Calu3 (cell line): ENCODE measurements at regions of chr7 and their contacts with region 1.

Region 1: GRCh38 chr7:54877683-54878082 is 118.7 kb upstream of the SEC61G start:
- DNase-seq: peak; percentile 43
- H3K4me3 Mint-ChIP-seq: no peak overlapping the region
- H3K27ac Mint-ChIP-seq: peak overlapping the region; percentile 13
- H3K4me1 Mint-ChIP-seq: peaks cover 57% of the 10 kb centered on the region
- H3K27me3 Mint-ChIP-seq: no peaks in the 10 kb centered on the region
- CTCF ChIP-seq: no peak

Region 2: GRCh38 chr7:54758702-54759592 is 118.7 kb before region 1 on chr7 and contains the start of gene SEC61G:
- CTCF ChIA-PET with region 1: interaction called, 10 read pairs
- intact Hi-C with region 1: no loop called
- DNase-seq: peak; percentile 99
- H3K4me3 Mint-ChIP-seq: peak within 1 kb of the TSS; percentile 99
- H3K27ac Mint-ChIP-seq: peak within 1 kb of the TSS; percentile 99
- H3K4me1 Mint-ChIP-seq: peaks cover 23% of the 10 kb centered on the region
- H3K27me3 Mint-ChIP-seq: peaks cover 8% of the 10 kb centered on the region
- CTCF ChIP-seq: no peak
- total RNA-seq, gene SEC61G: 198 and 202 TPM in 2 replicates

Region 3: DNA sequence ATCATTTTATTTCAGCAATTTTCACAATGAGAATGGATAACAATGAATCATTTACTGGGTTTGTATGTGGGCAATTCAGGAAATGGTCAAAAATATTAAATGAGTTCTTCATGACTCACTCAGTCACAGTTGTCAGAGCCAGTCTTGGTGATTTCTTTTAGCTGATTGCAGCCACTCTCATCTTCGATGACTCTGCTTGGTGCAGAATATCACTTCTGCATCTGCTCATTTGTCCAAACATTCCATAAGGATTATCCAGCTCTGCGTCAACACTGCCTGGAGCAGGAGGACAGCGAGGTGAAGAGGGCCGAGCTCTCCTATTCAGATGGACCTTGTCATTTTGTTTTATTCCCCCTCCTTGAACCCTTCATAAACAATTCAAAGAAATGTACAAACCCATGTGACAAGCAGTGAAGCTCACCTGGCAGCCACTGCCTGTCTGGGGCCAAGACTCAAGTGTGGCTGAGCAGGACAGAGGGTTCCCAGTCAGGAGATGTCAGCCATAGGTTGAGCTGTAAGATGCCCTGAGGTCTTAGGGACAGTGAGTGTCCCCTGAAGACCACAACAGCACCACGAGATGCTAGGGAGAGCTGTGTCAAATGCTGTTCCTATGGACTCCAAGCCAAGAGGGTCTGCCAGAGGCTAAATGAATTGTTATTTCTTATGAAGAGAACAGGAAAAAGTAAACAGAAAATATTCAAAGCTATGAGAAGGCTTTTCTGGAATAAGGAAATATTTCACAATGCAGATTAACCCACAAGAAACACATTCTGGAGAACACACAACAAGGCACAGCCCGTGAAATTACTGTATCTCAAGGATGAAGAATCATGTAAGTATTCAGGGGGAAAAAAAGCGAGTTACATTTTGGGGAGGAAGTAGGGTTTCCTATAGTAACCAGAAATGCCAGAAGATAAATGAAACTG is 108.0 kb after region 1 on chr7:
- CTCF ChIA-PET with region 1: no interaction called
- intact Hi-C with region 1: loop called (anchors 5 kb)
- DNase-seq: no peak
- H3K4me3 Mint-ChIP-seq: peak overlapping the region; percentile 33
- H3K27ac Mint-ChIP-seq: peak overlapping the region; percentile 88
- H3K4me1 Mint-ChIP-seq: peaks cover 25% of the 10 kb centered on the region
- H3K27me3 Mint-ChIP-seq: no peaks in the 10 kb centered on the region
- CTCF ChIP-seq: no peak

Region 4: DNA sequence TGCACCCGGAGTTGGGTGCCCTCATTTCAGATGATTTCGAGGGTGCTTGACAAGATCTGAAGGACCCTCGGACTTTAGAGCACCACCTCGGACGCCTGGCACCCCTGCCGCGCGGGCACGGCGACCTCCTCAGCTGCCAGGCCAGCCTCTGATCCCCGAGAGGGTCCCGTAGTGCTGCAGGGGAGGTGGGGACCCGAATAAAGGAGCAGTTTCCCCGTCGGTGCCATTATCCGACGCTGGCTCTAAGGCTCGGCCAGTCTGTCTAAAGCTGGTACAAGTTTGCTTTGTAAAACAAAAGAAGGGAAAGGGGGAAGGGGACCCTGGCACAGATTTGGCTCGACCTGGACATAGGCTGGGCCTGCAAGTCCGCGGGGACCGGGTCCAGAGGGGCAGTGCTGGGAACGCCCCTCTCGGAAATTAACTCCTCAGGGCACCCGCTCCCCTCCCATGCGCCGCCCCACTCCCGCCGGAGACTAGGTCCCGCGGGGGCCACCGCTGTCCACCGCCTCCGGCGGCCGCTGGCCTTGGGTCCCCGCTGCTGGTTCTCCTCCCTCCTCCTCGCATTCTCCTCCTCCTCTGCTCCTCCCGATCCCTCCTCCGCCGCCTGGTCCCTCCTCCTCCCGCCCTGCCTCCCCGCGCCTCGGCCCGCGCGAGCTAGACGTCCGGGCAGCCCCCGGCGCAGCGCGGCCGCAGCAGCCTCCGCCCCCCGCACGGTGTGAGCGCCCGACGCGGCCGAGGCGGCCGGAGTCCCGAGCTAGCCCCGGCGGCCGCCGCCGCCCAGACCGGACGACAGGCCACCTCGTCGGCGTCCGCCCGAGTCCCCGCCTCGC is 140.9 kb after region 1 on chr7 and contains the start of gene EGFR:
- CTCF ChIA-PET with region 1: interaction called, 13 read pairs
- intact Hi-C with region 1: no loop called
- DNase-seq: peak; percentile 90
- H3K4me3 Mint-ChIP-seq: peak within 1 kb of the TSS; percentile 84
- H3K27ac Mint-ChIP-seq: peak within 1 kb of the TSS; percentile 84
- H3K4me1 Mint-ChIP-seq: peaks cover 37% of the 10 kb centered on the region
- H3K27me3 Mint-ChIP-seq: no peaks in the 10 kb centered on the region
- CTCF ChIP-seq: no peak
- total RNA-seq, gene EGFR: 85.3 and 87.4 TPM in 2 replicates

Region 5: DNA sequence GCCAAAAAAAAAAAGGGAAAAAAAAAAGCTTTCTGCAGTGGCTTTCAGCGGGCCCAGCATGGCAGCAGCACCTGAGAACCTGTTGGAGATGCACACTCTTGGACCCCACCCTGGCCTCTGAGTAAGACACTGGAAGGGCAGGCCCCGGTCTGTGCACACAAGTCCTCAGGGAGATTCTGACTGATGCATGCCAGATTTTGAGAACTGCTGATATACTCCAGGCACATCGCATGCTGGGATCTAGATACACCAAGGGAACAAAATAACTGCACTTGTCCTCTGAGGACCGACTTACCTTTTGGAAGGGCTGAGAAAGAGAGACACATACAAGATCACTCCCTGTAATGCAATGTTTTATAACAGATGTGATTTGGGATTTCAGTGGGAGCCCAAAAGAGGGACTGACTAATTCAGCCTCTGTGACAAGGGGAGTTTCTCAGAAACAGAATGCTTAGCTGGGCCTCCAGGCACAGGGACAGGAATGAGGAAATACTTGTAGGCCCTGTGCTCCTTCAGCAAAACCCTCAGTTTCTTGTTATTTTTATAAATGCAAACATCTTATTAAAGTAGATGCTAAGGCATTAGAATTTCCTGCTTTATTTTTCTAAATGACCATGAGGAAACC is 149.3 kb after region 1 on chr7:
- CTCF ChIA-PET with region 1: no interaction called
- intact Hi-C with region 1: loop called (anchors 5 kb)
- DNase-seq: peak; percentile 42
- H3K4me3 Mint-ChIP-seq: no peak overlapping the region
- H3K27ac Mint-ChIP-seq: peak overlapping the region; percentile 80
- H3K4me1 Mint-ChIP-seq: peaks cover 84% of the 10 kb centered on the region
- H3K27me3 Mint-ChIP-seq: no peaks in the 10 kb centered on the region
- CTCF ChIP-seq: no peak

Region 6: GRCh38 chr7:55073945-55074499 is 196.3 kb after region 1 on chr7:
- CTCF ChIA-PET with region 1: interaction called, 3 read pairs
- intact Hi-C with region 1: loop called (anchors 5 kb)
- DNase-seq: peak; percentile 93
- H3K4me3 Mint-ChIP-seq: peak overlapping the region; percentile 66
- H3K27ac Mint-ChIP-seq: peak overlapping the region; percentile 98
- H3K4me1 Mint-ChIP-seq: peaks cover 97% of the 10 kb centered on the region
- H3K27me3 Mint-ChIP-seq: no peaks in the 10 kb centered on the region
- CTCF ChIP-seq: no peak

Region 7: DNA sequence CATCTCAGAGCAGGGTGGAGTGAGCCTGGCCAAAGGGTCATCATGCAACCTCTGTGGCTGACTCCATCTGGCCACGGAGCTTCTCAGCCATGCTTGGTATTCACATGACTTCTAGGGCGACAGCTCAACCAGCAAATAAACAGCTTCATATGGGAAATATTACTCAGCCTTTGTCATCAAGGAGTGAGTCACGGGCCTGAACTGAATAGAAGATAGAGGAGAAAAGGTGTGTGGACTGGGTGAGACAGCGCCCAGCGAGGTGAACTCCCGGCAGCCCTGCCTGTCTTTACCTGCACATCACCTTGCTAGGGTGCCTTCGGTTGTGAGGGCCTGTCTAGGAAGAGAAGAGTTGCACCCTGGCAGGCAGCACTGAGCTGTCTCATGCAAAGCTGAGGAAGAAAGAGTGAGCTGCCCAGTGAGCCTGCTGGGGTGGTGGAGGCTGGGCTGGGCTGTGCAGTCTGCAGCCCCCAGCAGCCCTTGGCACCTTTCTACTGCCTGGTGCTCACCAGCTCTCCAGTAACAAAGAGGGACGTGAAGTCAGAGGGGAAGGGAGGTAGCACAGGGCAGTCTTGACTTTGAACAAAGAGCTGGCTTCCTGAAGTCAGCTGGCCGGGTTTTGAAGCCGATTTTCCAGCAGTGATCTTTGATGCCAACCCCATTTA is 255.3 kb after region 1 on chr7:
- CTCF ChIA-PET with region 1: interaction called, 17 read pairs
- intact Hi-C with region 1: loop called (anchors 5 kb)
- DNase-seq: peak; percentile 89
- H3K4me3 Mint-ChIP-seq: peak overlapping the region; percentile 39
- H3K27ac Mint-ChIP-seq: peak overlapping the region; percentile 95
- H3K4me1 Mint-ChIP-seq: peaks cover 72% of the 10 kb centered on the region
- H3K27me3 Mint-ChIP-seq: no peaks in the 10 kb centered on the region
- CTCF ChIP-seq: peak; percentile 20